Aorta (tissue), 5 donors: ENCODE measurements at regions of chr15 and their contacts with region 1.

Region 1: DNA sequence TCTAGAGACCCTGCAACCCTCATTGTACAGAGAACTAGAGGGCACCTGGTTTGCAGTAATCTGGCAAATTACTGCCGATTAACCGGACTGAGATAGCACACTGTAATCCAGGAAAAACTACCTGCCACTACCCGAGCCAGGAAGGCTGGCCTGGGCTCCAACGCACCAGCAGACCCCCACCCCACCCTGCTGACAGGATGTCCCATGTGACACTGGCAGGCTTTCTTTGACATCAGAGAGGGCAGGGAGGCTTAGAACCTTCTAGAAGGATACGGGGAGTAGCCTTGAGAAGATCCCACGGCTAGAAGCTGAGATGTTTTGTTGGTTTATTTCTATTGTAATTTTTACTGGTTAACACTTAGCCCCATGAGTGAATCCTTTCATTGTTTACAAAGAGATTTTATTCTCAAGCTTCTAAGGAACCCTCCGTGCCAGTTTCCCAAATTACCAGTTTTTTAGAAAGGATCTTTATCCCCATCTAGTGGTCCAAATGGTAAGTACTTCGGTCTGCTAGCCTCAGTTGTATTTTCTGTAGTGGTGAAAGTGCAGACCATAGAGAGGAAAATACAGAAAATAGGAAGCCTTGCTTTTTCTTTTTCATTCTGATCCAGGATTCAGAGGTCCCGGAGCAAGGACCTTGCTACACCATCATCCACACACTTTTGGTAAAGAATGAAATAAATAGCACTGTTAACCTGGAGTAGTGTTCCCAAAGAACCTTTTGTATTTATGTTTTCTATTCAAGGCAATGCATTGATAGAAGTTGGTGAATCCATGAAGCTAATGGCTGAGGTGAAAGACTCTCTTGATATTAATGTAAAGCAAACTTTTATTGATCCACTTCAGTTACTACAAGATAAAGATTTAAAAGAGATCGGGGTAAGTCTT is 81.9 kb upstream of the ADAMTSL3 start:
- DNase-seq: no peak
- ATAC-seq: peak; percentile 58
- H3K4me3 ChIP-seq: no peak overlapping the region
- H3K27ac ChIP-seq: no peak overlapping the region
- H3K4me1 ChIP-seq: no peaks in the 10 kb centered on the region
- H3K27me3 ChIP-seq: no peaks in the 10 kb centered on the region

Region 2: GRCh38 chr15:83053151-83053550 is 518.9 kb before region 1 on chr15:
- intact Hi-C with region 1: no loop called
- DNase-seq: no peak
- ATAC-seq: peak; percentile 59
- H3K4me3 ChIP-seq: no peak overlapping the region
- H3K27ac ChIP-seq: no peak overlapping the region
- H3K4me1 ChIP-seq: peaks cover 0 to 2% of the 10 kb centered on the region in 2 donors
- H3K27me3 ChIP-seq: no peaks in the 10 kb centered on the region

Region 3: DNA sequence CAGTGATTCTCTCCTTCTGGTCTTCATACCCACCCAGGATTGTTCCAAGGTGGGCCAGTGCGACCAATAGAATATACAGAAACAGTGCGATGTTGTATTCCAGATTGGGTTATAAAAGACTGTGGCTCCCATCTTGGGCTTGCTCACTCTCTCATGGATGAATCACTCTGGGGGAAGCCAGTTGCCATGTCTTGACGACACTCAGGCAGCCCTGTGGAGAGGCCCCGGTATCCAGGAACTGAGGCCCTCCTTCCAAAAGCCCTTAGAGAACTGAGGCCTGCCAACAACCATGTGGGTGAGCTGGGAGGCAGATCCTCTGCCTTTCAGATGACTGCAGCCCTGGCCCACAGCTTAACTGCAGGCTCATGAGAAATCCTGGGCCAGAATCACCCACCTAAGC is 67.7 kb before region 1 on chr15:
- intact Hi-C with region 1: no loop called
- DNase-seq: no peak
- ATAC-seq: no peak
- H3K4me3 ChIP-seq: no peak overlapping the region
- H3K27ac ChIP-seq: no peak overlapping the region
- H3K4me1 ChIP-seq: no peaks in the 10 kb centered on the region
- H3K27me3 ChIP-seq: no peaks in the 10 kb centered on the region

Region 4: DNA sequence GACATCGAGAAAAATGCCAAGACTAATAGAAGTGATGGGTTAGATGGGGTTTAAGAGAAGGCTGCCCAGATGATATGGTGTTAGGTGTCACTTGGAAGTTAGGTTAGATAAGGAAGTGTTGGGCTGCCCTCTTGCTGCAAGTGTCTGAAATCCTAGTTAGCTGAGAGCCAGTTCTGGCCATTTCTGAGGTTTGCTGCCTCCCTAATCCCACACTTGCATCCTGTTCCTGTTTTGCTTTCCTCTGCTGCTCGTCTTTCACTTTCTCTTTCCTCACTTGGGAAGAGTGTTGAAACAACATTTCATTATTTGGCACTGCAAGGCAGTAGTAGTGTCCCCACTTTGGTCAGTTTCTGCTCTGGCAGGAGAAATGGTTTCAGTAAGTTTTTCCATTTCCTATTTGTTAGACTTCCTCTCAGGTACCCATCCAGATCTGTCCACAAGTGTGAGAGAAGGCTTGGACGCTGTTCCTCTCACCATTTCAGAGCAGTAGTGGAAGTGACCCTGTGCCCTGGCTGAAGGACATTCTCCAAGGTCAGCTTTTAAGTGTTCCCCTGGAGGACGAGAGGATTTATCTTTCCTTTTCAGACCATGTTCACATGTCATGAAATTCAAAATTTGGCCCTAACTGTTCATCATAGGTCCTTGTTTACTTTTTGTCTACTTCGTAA is 175.1 kb after region 1 on chr15:
- intact Hi-C with region 1: loop called (anchors 5 to 10 kb)
- DNase-seq: no peak
- ATAC-seq: peak; percentile 91
- H3K4me3 ChIP-seq: peak overlapping the region in 1 of 2 donors; percentile 63
- H3K27ac ChIP-seq: peak overlapping the region; percentile 85 to 89
- H3K4me1 ChIP-seq: peaks cover 0 to 3% of the 10 kb centered on the region in 2 donors
- H3K27me3 ChIP-seq: no peaks in the 10 kb centered on the region

Region 5: GRCh38 chr15:83769416-83770004 is 197.4 kb after region 1 on chr15:
- intact Hi-C with region 1: no loop called
- DNase-seq: no peak
- ATAC-seq: no peak
- H3K4me3 ChIP-seq: no peak overlapping the region
- H3K27ac ChIP-seq: no peak overlapping the region
- H3K4me1 ChIP-seq: peaks cover 0 to 2% of the 10 kb centered on the region in 2 donors
- H3K27me3 ChIP-seq: no peaks in the 10 kb centered on the region

Region 6: DNA sequence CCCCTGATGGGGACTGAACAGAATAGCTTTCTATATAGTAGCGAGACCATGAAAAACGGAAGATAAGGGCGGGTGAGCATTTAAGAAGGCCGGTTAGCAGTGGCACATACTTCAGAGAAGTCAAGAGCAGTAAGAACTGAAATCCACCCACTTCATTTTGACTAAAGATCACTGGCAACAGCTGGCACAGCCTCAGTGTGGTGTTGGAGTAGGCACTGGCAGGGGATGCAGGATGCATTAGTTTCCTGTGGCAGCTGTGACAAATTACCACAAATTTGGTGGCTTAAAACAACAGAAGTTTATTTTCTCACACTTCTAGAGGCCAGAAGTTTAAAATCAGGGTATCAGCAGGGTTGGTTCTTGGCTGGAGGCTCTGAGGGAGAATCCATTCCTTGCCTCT is 258.3 kb after region 1 on chr15:
- intact Hi-C with region 1: loop called in 1 of 2 experiments (anchors 5 kb)
- DNase-seq: no peak
- ATAC-seq: no peak
- H3K4me3 ChIP-seq: no peak overlapping the region
- H3K27ac ChIP-seq: no peak overlapping the region
- H3K4me1 ChIP-seq: peaks cover 0 to 2% of the 10 kb centered on the region in 2 donors
- H3K27me3 ChIP-seq: no peaks in the 10 kb centered on the region

Region 7: DNA sequence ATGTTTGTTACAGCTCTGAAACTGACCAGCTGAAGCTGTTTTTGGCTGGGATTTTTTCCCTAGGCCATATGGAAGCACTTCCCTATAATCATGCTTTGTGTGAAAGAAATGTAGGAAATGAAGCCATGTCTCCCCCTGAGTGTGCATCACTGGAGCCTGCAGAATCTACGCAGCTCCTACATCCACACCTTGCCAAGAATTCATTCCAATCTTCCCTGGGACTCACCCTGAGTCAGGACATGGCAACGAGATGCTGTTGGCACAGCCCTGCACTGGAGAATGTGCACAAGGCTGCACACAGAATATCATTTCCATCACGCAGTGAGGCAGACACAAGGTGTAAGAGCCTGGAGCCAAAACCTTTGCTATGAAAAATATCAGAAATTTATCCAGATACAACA is 271.4 kb after region 1 on chr15:
- intact Hi-C with region 1: loop called in 1 of 2 experiments (anchors 5 kb)
- DNase-seq: peak; percentile 67 to 83
- ATAC-seq: peak; percentile 33
- H3K4me3 ChIP-seq: no peak overlapping the region
- H3K27ac ChIP-seq: peak overlapping the region in 1 of 2 donors; percentile 40
- H3K4me1 ChIP-seq: no peaks in the 10 kb centered on the region
- H3K27me3 ChIP-seq: no peaks in the 10 kb centered on the region

Region 8: DNA sequence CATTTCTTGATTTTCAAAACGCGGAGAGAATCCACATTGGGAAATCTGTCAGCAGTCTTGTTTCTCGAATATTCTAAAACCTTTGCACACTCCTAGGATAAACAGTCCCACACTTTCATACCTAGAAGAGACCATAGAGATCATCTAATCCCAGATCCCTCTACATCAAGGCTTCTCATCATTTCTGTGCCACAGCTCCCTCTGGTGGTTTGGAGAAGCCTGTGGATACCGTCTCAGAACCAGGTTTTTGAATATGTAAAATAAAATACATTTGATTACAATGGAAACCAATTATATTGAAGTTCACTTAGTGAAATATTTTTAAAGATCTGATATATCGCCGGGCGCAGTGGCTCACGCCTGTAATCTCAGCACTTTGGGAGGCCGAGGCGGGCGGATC is 451.6 kb after region 1 on chr15:
- intact Hi-C with region 1: loop called in 1 of 2 experiments (anchors 5 kb)
- DNase-seq: no peak
- ATAC-seq: no peak
- H3K4me3 ChIP-seq: no peak overlapping the region
- H3K27ac ChIP-seq: no peak overlapping the region
- H3K4me1 ChIP-seq: no peaks in the 10 kb centered on the region
- H3K27me3 ChIP-seq: no peaks in the 10 kb centered on the region

Region 9: DNA sequence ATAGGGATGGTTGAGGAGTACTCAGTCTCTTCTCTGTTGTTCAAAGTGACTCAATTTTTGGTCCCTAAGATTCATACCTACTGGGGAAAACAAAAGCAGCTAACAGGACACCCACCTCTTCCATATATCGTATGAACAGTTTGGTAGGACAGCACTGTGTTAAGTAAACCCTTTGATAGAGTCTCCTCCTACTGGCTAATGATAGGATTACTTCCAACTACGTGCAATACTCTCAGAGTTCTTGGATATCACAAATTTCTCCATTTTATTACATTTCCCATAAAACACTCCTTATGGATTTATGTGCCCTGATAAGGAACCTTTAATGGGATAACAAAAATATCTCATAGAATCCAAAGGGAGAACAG is 463.3 kb after region 1 on chr15:
- intact Hi-C with region 1: loop called in 1 of 2 experiments (anchors 5 kb)
- DNase-seq: no peak
- ATAC-seq: peak; percentile 74
- H3K4me3 ChIP-seq: no peak overlapping the region
- H3K27ac ChIP-seq: no peak overlapping the region
- H3K4me1 ChIP-seq: no peaks in the 10 kb centered on the region
- H3K27me3 ChIP-seq: no peaks in the 10 kb centered on the region